Activated T-helper 2 cell treated with anti-CD3 and anti-CD28 coated beads, Interferon-gamma antibody, Interleukin-2, Interleukin-4, amounts not matched to agents 10 μg/mL and 5 μg/mL and 100 μg/mL, durations not matched to agents 14 hours and 24 hours and 36 hours (primary cell): ENCODE measurements at regions of chr5 and their contacts with region 1.

Region 1: DNA sequence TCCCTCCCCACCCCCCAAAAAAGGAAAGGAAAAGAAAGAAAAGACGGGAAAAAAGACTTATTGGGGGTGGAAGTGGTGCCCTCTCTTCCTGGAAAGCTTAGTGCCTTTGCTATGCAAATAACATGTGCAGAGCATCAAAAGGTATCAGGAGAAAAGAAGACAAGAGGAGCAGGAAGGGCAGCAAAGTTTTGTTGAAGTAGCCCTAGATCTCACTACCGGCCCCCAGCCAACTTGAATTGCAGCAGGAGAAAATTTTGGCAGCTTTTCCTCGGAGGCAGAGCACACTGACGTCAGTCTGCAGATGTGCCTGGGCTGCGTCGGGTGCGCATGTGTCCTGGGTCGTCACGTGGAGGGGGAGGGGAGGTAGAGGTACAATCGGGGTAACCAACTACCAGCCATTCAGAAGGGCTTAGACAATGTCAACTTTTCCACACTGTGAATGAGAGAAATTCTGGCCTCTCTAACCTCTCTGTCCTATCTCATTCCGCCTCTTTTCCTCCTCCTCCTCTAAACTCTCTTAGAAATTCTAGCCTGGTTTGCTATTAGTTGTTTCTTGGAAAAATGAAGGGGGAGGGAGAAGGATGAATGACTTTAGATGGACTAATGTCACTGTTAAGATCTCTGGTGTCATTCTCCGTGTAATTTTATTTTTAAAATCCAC is at the start of gene ADAMTS6:
- DNase-seq: peak; percentile 69
- H3K4me3 Mint-ChIP-seq: no peak within 1 kb of the TSS
- H3K27ac Mint-ChIP-seq: peak within 1 kb of the TSS; percentile 84
- H3K4me1 Mint-ChIP-seq: peaks cover 21% of the 10 kb centered on the region
- H3K27me3 Mint-ChIP-seq: peaks cover 6% of the 10 kb centered on the region
- total RNA-seq, gene ADAMTS6: 1.4 and 1.7 TPM in 2 replicates

Region 2: GRCh38 chr5:64811050-64811640 is 670.6 kb before region 1 on chr5:
- intact Hi-C with region 1: loop called (anchors 1 kb)
- DNase-seq: no peak
- H3K4me3 Mint-ChIP-seq: no peak overlapping the region
- H3K27ac Mint-ChIP-seq: no peak overlapping the region
- H3K4me1 Mint-ChIP-seq: peaks cover 7% of the 10 kb centered on the region
- H3K27me3 Mint-ChIP-seq: no peaks in the 10 kb centered on the region

Region 3: GRCh38 chr5:65035211-65036206 is 446.3 kb before region 1 on chr5:
- intact Hi-C with region 1: loop called (anchors 1 kb)
- DNase-seq: peak; percentile 79
- H3K4me3 Mint-ChIP-seq: peak overlapping the region; percentile 78
- H3K27ac Mint-ChIP-seq: peak overlapping the region; percentile 83
- H3K4me1 Mint-ChIP-seq: peaks cover 34% of the 10 kb centered on the region
- H3K27me3 Mint-ChIP-seq: no peaks in the 10 kb centered on the region

Region 4: GRCh38 chr5:65172486-65173129 is 309.2 kb before region 1 on chr5:
- intact Hi-C with region 1: loop called (anchors 5 kb)
- DNase-seq: no peak
- H3K4me3 Mint-ChIP-seq: no peak overlapping the region
- H3K27ac Mint-ChIP-seq: no peak overlapping the region
- H3K4me1 Mint-ChIP-seq: peaks cover 3% of the 10 kb centered on the region
- H3K27me3 Mint-ChIP-seq: peaks cover 27% of the 10 kb centered on the region

Region 5: GRCh38 chr5:65721720-65722574 is 240.2 kb after region 1 on chr5 and contains the starts of genes NLN and SGTB:
- intact Hi-C with region 1: loop called (anchors 5 kb)
- DNase-seq: peak; percentile 79
- H3K4me3 Mint-ChIP-seq: peak within 1 kb of the TSS; percentile 93
- H3K27ac Mint-ChIP-seq: peak within 1 kb of the TSS; percentile 88
- H3K4me1 Mint-ChIP-seq: peaks cover 29% of the 10 kb centered on the region
- H3K27me3 Mint-ChIP-seq: no peaks in the 10 kb centered on the region
- total RNA-seq, gene NLN: 22.5 and 22.8 TPM in 2 replicates
- total RNA-seq, gene SGTB: 7.6 TPM in 2 replicates